HepG2 (cell line): ENCODE measurements at regions of chr14 and their contacts with region 1.

Region 1: GRCh38 chr14:82710267-82710841 is 1176.7 kb upstream of the SEL1L start:
- DNase-seq: peak; percentile 26
- ATAC-seq: peak; percentile 71; the same call in 2 of the 3 replicates
- H3K4me3 ChIP-seq: no peak overlapping the region
- H3K27ac ChIP-seq: no peak overlapping the region
- H3K4me1 ChIP-seq: no peaks in the 10 kb centered on the region
- H3K27me3 ChIP-seq: no peaks in the 10 kb centered on the region
- CTCF ChIP-seq: peak; percentile 70
- EP300 ChIP-seq: no peak
- POLR2A ChIP-seq: no peak
- RAD21 ChIP-seq: no peak; the same call in 1 of the 2 replicates

Region 2: DNA sequence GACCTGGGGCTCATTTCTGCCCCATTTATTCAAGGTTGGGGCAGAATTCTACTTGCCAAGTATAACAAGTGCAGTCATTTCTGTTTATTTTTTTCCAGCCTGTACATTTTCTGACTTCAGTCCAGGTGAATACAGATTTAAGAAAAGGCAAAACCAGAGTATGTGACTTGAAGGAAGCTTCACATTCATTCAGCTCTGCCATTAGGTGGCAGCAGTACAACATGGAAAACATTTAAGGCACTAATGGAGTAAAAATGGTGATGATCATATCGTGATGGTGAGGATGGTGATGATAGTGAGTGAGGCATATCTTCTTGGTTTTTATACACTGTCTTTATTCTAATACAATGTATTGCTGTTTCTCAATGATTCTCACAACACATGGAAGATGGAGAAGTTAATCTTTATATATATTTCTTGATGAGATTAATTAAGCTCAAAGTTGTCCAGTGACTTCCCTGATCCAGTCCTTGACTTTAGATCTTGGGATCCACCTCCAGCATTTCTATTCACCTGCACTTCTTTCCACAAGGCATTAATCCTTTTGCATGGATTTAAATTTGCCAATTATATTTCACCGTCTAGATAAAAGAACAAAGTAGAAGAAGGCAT is 1000.0 kb before region 1 on chr14:
- CTCF ChIA-PET with region 1: no interaction called
- POLR2A ChIA-PET with region 1: no interaction called
- in situ Hi-C with region 1: no loop called
- intact Hi-C with region 1: loop called (anchors 1 kb)
- DNase-seq: peak; percentile 42
- ATAC-seq: peak; percentile 58; the same call in 1 of the 3 replicates
- H3K4me3 ChIP-seq: no peak overlapping the region
- H3K27ac ChIP-seq: no peak overlapping the region
- H3K4me1 ChIP-seq: no peaks in the 10 kb centered on the region
- H3K27me3 ChIP-seq: no peaks in the 10 kb centered on the region
- CTCF ChIP-seq: peak; percentile 76
- EP300 ChIP-seq: no peak
- POLR2A ChIP-seq: no peak
- RAD21 ChIP-seq: no peak

Region 3: DNA sequence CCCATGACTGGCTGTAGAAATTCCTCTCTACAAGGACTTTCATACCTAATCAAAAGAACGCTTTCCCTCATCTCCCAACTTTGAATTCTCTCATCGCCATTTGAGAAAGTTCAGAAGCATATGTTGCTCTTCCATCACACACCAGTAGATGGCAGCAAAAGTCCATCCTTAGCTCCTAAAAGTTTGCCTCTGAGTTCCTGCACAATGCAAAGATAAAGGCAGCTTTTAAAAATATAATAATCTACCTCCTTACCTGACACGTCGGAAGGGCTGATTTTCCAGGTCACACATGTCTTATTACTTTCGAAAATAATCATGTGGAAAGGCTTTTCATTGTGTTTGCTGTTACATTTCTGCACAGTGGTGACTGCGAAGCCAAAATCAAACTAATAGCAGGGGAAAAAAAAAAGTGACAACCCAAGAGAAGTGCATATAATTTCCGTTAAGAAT is 720.0 kb before region 1 on chr14:
- CTCF ChIA-PET with region 1: no interaction called
- POLR2A ChIA-PET with region 1: no interaction called
- in situ Hi-C with region 1: no loop called
- intact Hi-C with region 1: loop called (anchors 10 kb)
- DNase-seq: peak; percentile 33
- ATAC-seq: peak; percentile 45; the same call in 1 of the 3 replicates
- H3K4me3 ChIP-seq: no peak overlapping the region
- H3K27ac ChIP-seq: no peak overlapping the region
- H3K4me1 ChIP-seq: peaks cover 11% of the 10 kb centered on the region
- H3K27me3 ChIP-seq: no peaks in the 10 kb centered on the region
- CTCF ChIP-seq: peak; percentile 80
- EP300 ChIP-seq: no peak
- POLR2A ChIP-seq: no peak
- RAD21 ChIP-seq: peak; percentile 64

Region 4: DNA sequence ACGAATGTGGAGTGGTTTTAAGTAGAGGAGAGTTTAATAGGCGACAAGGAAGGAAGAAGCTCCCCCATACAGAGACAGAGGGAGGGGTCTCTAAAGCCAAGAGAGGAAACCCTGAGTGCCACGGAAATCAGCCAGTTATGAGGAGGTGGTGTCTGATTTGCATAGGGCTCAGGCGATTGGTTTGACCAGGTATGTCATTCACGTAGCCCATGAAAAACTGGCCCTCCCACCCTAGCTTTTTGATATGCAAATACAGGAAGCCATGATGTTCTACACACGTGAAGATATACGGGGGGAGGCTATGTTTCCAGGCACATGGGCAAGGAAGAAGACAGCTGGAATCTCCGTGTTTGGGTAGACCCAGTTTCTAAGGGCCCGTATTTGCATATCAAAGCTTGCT is 458.9 kb before region 1 on chr14:
- CTCF ChIA-PET with region 1: no interaction called
- POLR2A ChIA-PET with region 1: no interaction called
- in situ Hi-C with region 1: no loop called
- intact Hi-C with region 1: no loop called
- DNase-seq: no peak
- ATAC-seq: no peak
- H3K4me3 ChIP-seq: no peak overlapping the region
- H3K27ac ChIP-seq: no peak overlapping the region
- H3K4me1 ChIP-seq: no peaks in the 10 kb centered on the region
- H3K27me3 ChIP-seq: no peaks in the 10 kb centered on the region
- CTCF ChIP-seq: no peak
- EP300 ChIP-seq: no peak
- POLR2A ChIP-seq: no peak
- RAD21 ChIP-seq: no peak

Region 5: DNA sequence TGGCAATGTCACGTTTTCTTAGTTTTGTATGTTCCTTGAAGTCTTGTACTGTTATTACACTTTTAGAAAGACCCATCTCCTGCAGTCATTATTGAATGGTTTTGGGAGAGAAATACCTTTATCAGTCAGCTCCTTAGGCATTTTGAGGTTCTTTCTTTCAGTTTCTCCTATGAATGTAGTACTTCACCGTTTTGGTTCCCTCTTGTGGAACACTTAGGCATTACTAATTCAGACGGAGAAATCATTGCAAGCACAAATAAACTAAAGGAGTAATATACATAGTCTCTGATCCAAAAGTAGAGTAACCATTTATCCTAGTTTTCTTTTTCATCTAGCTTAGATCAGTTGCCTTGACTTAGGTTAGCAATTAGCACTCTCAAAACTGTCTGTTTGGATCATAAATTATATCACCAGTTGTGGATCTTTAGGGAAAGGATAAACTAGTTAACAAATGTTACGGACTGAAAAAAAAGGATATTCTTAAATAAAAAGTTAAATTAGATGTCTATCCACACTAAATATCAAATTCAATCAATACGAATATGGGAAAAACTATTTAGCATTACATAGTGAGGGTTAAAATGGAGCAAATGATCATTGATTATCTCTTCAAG is 361.6 kb after region 1 on chr14:
- CTCF ChIA-PET with region 1: interaction called, 5 read pairs
- POLR2A ChIA-PET with region 1: no interaction called
- in situ Hi-C with region 1: no loop called
- intact Hi-C with region 1: loop called (anchors 1 kb)
- DNase-seq: peak; percentile 18
- ATAC-seq: no peak
- H3K4me3 ChIP-seq: no peak overlapping the region
- H3K27ac ChIP-seq: no peak overlapping the region
- H3K4me1 ChIP-seq: no peaks in the 10 kb centered on the region
- H3K27me3 ChIP-seq: no peaks in the 10 kb centered on the region
- CTCF ChIP-seq: peak; percentile 22; the same call in 1 of the 2 replicates
- EP300 ChIP-seq: no peak
- POLR2A ChIP-seq: no peak
- RAD21 ChIP-seq: no peak

Region 6: GRCh38 chr14:83463500-83464098 is 753.2 kb after region 1 on chr14:
- CTCF ChIA-PET with region 1: no interaction called
- POLR2A ChIA-PET with region 1: no interaction called
- in situ Hi-C with region 1: no loop called
- intact Hi-C with region 1: loop called (anchors 5 kb)
- DNase-seq: peak; percentile 12
- ATAC-seq: no peak; the same call in 2 of the 3 replicates
- H3K4me3 ChIP-seq: no peak overlapping the region
- H3K27ac ChIP-seq: no peak overlapping the region
- H3K4me1 ChIP-seq: no peaks in the 10 kb centered on the region
- H3K27me3 ChIP-seq: no peaks in the 10 kb centered on the region
- CTCF ChIP-seq: peak; percentile 40
- EP300 ChIP-seq: no peak
- POLR2A ChIP-seq: no peak
- RAD21 ChIP-seq: no peak

Region 7: GRCh38 chr14:84024231-84024820 is 1314.0 kb after region 1 on chr14:
- CTCF ChIA-PET with region 1: no interaction called
- POLR2A ChIA-PET with region 1: no interaction called
- in situ Hi-C with region 1: no loop called
- intact Hi-C with region 1: loop called (anchors 5 kb)
- DNase-seq: no peak
- ATAC-seq: no peak
- H3K4me3 ChIP-seq: no peak overlapping the region
- H3K27ac ChIP-seq: no peak overlapping the region
- H3K4me1 ChIP-seq: no peaks in the 10 kb centered on the region
- H3K27me3 ChIP-seq: no peaks in the 10 kb centered on the region
- CTCF ChIP-seq: no peak
- EP300 ChIP-seq: no peak
- POLR2A ChIP-seq: no peak
- RAD21 ChIP-seq: no peak